Breast epithelium (tissue), 4 donors: ENCODE measurements at regions of chr1 and their contacts with region 1.

Region 1: GRCh38 chr1:94863919-94864318 is 43.8 kb downstream of the SLC44A3 start:
- DNase-seq: peak in 1 of 2 donors; percentile 71
- H3K4me3 ChIP-seq: peak overlapping the region in 2 of 3 donors; percentile 15 to 49
- H3K27ac ChIP-seq: peak overlapping the region; percentile 93 to 99
- H3K4me1 ChIP-seq: peaks cover 10% of the 10 kb centered on the region in 2 donors
- H3K27me3 ChIP-seq: no peaks in the 10 kb centered on the region
- CTCF ChIP-seq: no peak
- POLR2A ChIP-seq: no peak

Region 2: GRCh38 chr1:93701619-93702018 is 1162.3 kb before region 1 on chr1:
- intact Hi-C with region 1: no loop called
- DNase-seq: peak; percentile 68 to 95
- H3K4me3 ChIP-seq: no peak overlapping the region
- H3K27ac ChIP-seq: peak overlapping the region; percentile 83 to 89
- H3K4me1 ChIP-seq: no peaks in the 10 kb centered on the region
- H3K27me3 ChIP-seq: no peaks in the 10 kb centered on the region
- CTCF ChIP-seq: no peak
- POLR2A ChIP-seq: no peak

Region 3: GRCh38 chr1:94851571-94851970 is 12.3 kb before region 1 on chr1:
- intact Hi-C with region 1: no loop called
- DNase-seq: no peak
- H3K4me3 ChIP-seq: no peak overlapping the region
- H3K27ac ChIP-seq: no peak overlapping the region
- H3K4me1 ChIP-seq: peaks cover 0 to 7% of the 10 kb centered on the region in 2 donors
- H3K27me3 ChIP-seq: no peaks in the 10 kb centered on the region
- CTCF ChIP-seq: no peak
- POLR2A ChIP-seq: no peak

Region 4: DNA sequence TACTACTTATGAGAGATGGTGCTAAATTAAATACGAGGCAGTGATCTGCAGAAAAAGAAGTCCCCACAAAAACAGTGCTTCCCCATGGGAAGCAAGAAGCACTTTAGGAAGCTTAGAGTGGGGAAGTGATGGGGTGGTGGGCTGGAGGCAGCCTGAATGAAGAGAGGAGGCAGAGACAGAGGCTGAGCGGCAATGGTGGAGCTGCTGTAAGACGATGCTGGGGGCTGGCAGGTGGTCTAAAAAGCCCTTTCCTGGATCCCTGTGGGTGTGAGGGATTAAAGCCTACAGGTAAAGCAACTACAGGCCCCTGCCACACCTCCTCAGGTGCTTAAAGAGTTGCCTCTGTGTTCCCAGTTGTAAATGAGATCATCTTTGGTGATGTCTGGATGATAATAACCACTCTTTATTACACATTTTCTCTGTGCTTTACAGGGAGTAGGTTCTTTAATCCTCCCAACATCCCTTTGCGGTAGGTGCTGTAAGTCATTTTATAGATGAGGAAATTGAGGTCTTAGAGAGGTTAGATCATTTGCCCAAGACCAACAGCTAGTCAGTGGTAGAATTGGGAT is 23.8 kb after region 1 on chr1:
- intact Hi-C with region 1: loop called (anchors 2 kb)
- DNase-seq: no peak
- H3K4me3 ChIP-seq: no peak overlapping the region
- H3K27ac ChIP-seq: no peak overlapping the region
- H3K4me1 ChIP-seq: peaks cover 0 to 6% of the 10 kb centered on the region in 2 donors
- H3K27me3 ChIP-seq: no peaks in the 10 kb centered on the region
- CTCF ChIP-seq: no peak
- POLR2A ChIP-seq: no peak

Region 5: GRCh38 chr1:94926915-94927404 is 63.0 kb after region 1 on chr1 and contains the start of gene CNN3:
- intact Hi-C with region 1: loop called (anchors 10 kb)
- DNase-seq: peak; percentile 92 to 93
- H3K4me3 ChIP-seq: peak within 1 kb of the TSS; percentile 64 to 96 (median 94)
- H3K27ac ChIP-seq: peak within 1 kb of the TSS; percentile 96 to 99
- H3K4me1 ChIP-seq: peaks cover 0 to 5% of the 10 kb centered on the region in 2 donors
- H3K27me3 ChIP-seq: no peaks in the 10 kb centered on the region
- CTCF ChIP-seq: no peak
- POLR2A ChIP-seq: peak; percentile 91
- total RNA-seq, gene CNN3: 146 to 330 (median 195) TPM